ENCODE measurements at regions of chr1 and their contacts with region 1.

Region 1: GRCh38 chr1:42846257-42847110 is at the start of gene ZNF691:
- DNase-seq: peak; percentile 84
- H3K4me3 ChIP-seq: peak within 1 kb of the TSS; percentile 93
- CTCF ChIP-seq: peak; percentile 74

Region 2: DNA sequence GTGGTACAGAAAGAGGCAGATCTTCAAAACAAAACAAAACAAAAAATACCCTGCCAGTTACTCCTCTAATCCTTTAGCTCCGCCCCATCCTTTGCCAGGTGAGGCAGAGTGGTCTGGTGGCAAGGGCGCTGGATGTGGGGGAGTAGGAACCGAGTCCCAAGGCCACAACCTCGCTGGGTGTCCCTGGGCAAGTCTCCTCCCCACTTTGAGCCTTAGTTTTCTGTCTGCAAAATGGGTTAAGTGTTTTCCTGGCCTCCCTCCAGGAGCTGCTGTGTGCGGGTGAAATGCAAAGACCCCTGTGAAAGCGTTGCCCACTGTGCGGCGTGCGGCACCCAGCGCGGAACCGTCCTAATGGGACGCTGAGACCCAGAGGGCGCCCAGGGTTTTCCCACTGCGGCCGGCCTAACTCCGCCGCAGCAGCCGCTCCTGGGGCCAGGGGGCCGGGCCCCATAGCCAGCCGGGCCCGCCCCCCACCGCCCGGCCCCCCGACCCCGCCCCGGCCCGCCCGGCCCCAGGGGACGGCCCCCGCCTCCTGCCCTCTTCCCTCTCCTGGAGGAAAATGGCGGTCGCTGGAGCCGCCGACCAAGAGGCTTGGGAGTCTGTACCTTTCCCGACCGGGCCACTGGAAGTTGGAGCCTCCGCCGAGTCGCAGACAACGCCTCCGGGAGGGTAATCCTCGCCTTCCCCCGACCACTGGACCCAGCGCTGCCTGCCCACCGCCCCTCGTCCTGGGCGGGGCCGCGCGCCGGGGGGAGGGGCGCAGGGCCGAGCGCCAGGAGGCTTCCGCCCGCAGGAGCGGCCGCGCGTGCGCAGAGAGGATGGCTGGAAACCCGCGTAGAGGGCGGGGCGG is 29.7 kb before region 1 on chr1 and contains the starts of genes ERMAP and SVBP:
- CTCF ChIA-PET with region 1: interaction called, 16 read pairs
- POLR2A ChIA-PET with region 1: interaction called, 3 read pairs
- DNase-seq: no peak
- H3K4me3 ChIP-seq: peak within 1 kb of the TSS; percentile 87
- CTCF ChIP-seq: no peak

Region 3: GRCh38 chr1:42822800-42823392 is 23.6 kb before region 1 on chr1:
- CTCF ChIA-PET with region 1: interaction called, 16 read pairs
- POLR2A ChIA-PET with region 1: no interaction called
- DNase-seq: no peak
- H3K4me3 ChIP-seq: no peak overlapping the region
- CTCF ChIP-seq: no peak

Region 4: DNA sequence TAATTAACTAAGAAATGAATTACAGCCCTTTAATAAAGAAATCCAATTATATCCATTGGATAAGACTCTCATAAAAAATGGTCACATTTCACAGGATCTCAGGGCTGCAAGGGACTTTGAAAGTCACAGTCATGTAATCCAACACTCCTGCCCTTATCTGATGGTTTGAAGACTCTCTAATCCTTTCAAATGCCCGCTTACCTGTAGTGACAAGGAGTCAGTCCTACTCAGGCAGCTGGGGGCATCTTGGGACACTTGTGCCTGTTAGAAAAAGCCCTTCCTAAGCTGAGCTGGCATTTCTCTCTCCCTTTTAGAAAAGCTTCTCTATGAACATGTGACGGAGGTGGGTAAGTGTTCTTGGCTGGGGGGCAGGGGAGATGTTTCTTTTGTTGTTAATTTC is 11.1 kb before region 1 on chr1:
- CTCF ChIA-PET with region 1: interaction called, 16 read pairs
- POLR2A ChIA-PET with region 1: interaction called, 3 read pairs
- DNase-seq: no peak
- H3K4me3 ChIP-seq: no peak overlapping the region
- CTCF ChIP-seq: no peak

Region 5: DNA sequence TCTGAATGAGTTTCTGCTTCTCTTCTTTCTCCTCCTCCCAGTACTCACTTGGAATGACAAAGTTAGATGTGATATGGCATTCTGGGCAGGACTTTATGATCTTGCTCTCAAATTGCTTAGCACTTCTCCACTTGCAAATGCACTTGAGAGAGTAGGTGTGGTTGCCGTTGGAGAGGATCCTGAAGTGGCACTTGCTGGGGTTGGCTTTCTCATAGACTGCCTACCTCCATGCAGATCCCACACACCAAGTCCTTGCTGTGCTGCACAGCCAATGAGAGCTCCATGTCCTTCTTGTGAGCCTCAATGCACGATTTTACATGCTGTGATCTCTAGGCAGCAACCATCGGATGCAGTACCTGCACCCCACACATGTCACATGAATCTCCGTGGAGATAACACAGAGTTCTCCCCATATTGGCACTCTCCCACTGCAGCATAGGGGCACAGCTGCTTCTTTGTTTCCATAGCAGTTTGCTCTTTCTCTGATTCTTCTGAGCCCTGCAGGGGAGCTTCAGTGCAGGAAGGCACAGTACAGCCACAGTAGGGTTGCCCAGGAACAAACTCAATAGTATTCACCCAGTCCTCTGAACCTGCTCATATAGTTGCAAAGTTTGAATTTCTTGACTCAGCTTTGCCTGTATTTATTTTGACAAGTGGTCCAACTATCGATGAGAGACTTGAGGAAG is 45.1 kb after region 1 on chr1:
- CTCF ChIA-PET with region 1: no interaction called
- POLR2A ChIA-PET with region 1: no interaction called
- DNase-seq: no peak
- H3K4me3 ChIP-seq: no peak overlapping the region
- CTCF ChIP-seq: no peak

Region 6: GRCh38 chr1:43327549-43328292 is 481.2 kb after region 1 on chr1:
- CTCF ChIA-PET with region 1: no interaction called
- POLR2A ChIA-PET with region 1: no interaction called
- DNase-seq: no peak
- H3K4me3 ChIP-seq: no peak overlapping the region
- CTCF ChIP-seq: no peak